Right ventricle myocardium inferior (tissue), 1 donor: ENCODE measurements at regions of chr1 and their contacts with region 1.

Region 1: DNA sequence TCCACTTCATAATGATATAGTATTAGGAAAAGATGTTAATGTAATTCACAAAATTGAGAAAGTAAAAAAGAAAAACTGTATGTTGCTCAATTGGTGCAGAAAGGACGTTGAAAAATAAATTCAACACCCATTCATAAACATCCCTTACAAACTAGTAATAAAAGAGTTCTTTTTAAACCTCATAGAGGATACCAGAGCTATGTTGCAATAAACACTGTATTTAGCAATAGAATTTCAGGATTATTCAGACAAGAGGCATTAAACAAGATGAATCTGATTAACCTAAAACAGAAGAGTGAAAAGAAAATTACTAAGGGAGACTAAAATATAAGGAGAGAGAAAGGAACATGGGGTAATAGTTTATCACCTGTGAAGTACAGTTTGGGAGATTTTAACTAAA is 154.8 kb downstream of the NTPCR start:
- DNase-seq: no peak
- ATAC-seq: no peak

Region 2: GRCh38 chr1:232950197-232951176 is 154.7 kb before region 1 on chr1 and contains the start of gene NTPCR:
- intact Hi-C with region 1: no loop called
- DNase-seq: peak; percentile 96
- ATAC-seq: peak; percentile 96
- total RNA-seq, gene NTPCR: 53.2 TPM

Region 3: DNA sequence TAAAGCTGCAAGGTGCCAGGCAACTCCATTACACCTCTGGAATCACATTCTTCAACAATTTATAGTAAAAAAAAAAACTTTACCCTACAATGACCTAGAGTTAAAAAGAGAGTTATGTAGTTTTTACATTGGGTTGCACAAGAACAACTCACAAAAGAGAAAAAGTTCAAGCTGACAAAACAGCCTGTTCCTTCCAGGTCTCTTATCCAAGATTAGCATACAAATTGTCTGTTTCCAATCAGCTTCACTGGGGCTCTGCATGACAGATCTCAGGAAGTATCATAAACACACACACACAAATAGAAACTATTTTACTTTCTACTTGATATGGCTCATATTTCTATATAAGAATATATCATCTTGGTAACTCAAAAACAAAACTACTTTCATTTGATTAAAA is 35.7 kb after region 1 on chr1:
- intact Hi-C with region 1: loop called (anchors 5 kb)
- DNase-seq: no peak
- ATAC-seq: peak; percentile 61

Region 4: GRCh38 chr1:233197940-233198339 is 92.7 kb after region 1 on chr1:
- intact Hi-C with region 1: no loop called
- DNase-seq: no peak
- ATAC-seq: no peak